ENCODE measurements at regions of chr15 and their contacts with region 1.

Region 1: DNA sequence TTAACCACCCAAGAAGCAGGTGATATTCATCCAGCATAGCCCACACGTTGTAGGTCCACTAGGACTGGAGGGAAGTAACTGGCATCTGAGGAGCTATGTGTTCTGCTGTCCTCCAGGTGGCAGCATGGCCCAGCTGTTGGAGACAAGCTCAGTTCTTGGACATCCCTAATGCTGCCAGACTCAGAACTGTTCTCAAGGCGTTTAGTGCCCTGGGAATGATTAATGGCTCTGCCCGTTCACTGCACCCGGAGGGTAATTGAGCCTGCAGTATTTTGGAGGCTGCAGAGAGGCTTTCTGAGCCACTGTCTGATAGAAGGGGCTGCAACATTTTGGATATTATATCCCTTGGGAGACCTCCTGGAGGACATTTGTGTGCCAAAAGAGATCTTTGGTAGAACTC is 521.2 kb upstream of the SEMA6D start:
- DNase-seq: peak; percentile 69 to 84 (median 79)
- ATAC-seq: peak; percentile 73 to 99 (median 96)
- H3K4me3 ChIP-seq: no peak overlapping the region
- H3K27ac ChIP-seq: no peak overlapping the region
- H3K4me1 ChIP-seq: no peaks in the 10 kb centered on the region
- H3K27me3 ChIP-seq: peaks cover 0 to 3% (median 0%) of the 10 kb centered on the region in 9 donors
- CTCF ChIP-seq: peak; percentile 69 to 89 (median 81)
- POLR2A ChIP-seq: no peak

Region 2: GRCh38 chr15:47466351-47466750 is 270.3 kb after region 1 on chr15:
- intact Hi-C with region 1: loop called in 6 of 10 experiments (anchors 5 to 10 kb)
- DNase-seq: no peak
- ATAC-seq: no peak
- H3K4me3 ChIP-seq: no peak overlapping the region
- H3K27ac ChIP-seq: no peak overlapping the region
- H3K4me1 ChIP-seq: peaks cover 0 to under 1% (median 0%) of the 10 kb centered on the region in 12 donors
- H3K27me3 ChIP-seq: no peaks in the 10 kb centered on the region
- CTCF ChIP-seq: no peak
- POLR2A ChIP-seq: no peak

Region 3: GRCh38 chr15:47609693-47610092 is 413.6 kb after region 1 on chr15:
- intact Hi-C with region 1: loop called in 4 of 10 experiments (anchors 5 to 10 kb)
- DNase-seq: no peak
- ATAC-seq: no peak
- H3K4me3 ChIP-seq: no peak overlapping the region
- H3K27ac ChIP-seq: no peak overlapping the region
- H3K4me1 ChIP-seq: peaks cover 0 to 12% (median 8%) of the 10 kb centered on the region in 12 donors
- H3K27me3 ChIP-seq: peaks cover 0 to 8% (median 0%) of the 10 kb centered on the region in 9 donors
- CTCF ChIP-seq: no peak
- POLR2A ChIP-seq: no peak

Region 4: GRCh38 chr15:47711654-47712053 is 515.6 kb after region 1 on chr15:
- intact Hi-C with region 1: loop called in 3 of 10 experiments (anchors 5 to 10 kb)
- DNase-seq: no peak
- ATAC-seq: no peak
- H3K4me3 ChIP-seq: no peak overlapping the region
- H3K27ac ChIP-seq: no peak overlapping the region
- H3K4me1 ChIP-seq: peaks cover 0 to 12% (median 7%) of the 10 kb centered on the region in 12 donors
- H3K27me3 ChIP-seq: peaks cover 0 to 4% (median 0%) of the 10 kb centered on the region in 9 donors
- CTCF ChIP-seq: peak; percentile 28 to 68 (median 54)
- POLR2A ChIP-seq: no peak

Region 5: DNA sequence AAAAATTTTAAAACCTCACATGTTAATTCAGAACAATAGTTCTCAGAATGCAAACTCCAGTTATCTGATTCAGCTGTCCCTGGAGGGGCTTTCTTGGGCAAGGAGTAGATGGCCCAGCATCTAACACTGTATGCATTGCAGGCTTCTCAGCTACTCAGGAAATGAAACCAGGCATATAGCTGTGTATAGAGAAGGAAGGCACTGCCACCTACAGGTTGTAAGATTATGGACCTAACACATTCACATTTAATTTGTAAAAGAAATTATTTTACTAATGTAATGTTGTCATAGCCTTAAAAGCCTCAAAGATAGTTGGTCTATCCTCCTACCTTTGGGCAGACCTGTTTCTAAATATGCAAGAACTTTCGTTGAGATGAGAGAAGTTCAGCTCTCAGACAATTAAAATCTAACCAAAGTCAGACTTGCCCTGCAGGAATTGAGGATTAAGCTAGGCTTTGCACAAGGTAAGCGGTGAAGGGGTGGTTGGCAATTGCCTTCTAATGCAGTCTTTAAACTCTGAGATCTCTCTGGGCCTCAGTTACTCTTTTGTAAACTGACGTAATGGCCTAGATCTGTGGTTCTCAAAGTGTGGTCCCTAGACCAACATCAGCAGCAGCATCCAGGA is 792.0 kb after region 1 on chr15:
- intact Hi-C with region 1: loop called (anchors 1 to 2 kb)
- DNase-seq: peak in 2 of 5 donors; percentile 31 to 34
- ATAC-seq: peak; percentile 75 to 94 (median 88)
- H3K4me3 ChIP-seq: no peak overlapping the region
- H3K27ac ChIP-seq: no peak overlapping the region
- H3K4me1 ChIP-seq: no peaks in the 10 kb centered on the region
- H3K27me3 ChIP-seq: no peaks in the 10 kb centered on the region
- CTCF ChIP-seq: peak; percentile 60 to 84 (median 74)
- POLR2A ChIP-seq: no peak

Region 6: DNA sequence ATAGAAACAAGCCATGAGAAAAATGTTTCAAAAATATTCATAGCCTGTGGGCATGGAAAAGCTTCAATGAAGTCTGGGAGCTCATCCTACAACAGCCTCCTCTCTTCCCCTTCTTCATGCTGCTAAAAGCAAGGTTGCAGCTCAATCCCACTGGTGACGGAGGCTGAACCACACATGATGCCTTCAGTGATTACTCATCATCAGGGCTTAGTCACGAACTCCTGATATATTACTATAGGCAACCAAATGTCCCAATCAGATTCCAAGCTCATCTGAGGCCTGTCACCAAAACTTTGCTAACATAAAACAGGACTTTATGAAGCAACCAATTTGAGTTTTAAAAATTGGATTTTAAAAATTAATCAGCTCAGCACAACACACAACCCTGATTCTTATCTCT is 900.8 kb after region 1 on chr15:
- intact Hi-C with region 1: loop called in 1 of 10 experiments (anchors 10 kb)
- DNase-seq: no peak
- ATAC-seq: no peak
- H3K4me3 ChIP-seq: no peak overlapping the region
- H3K27ac ChIP-seq: no peak overlapping the region
- H3K4me1 ChIP-seq: no peaks in the 10 kb centered on the region
- H3K27me3 ChIP-seq: peaks cover 0 to 13% (median 0%) of the 10 kb centered on the region in 9 donors
- CTCF ChIP-seq: no peak
- POLR2A ChIP-seq: no peak

Region 7: GRCh38 chr15:48285329-48286214 is 1089.5 kb after region 1 on chr15:
- intact Hi-C with region 1: loop called (anchors 2 to 10 kb)
- DNase-seq: peak in 3 of 5 donors; percentile 28 to 41 (median 38)
- ATAC-seq: peak; percentile 45 to 80 (median 70)
- H3K4me3 ChIP-seq: peak overlapping the region in 8 of 12 donors; percentile 5 to 31 (median 28)
- H3K27ac ChIP-seq: no peak overlapping the region
- H3K4me1 ChIP-seq: peaks cover 0 to 22% (median 0%) of the 10 kb centered on the region in 12 donors
- H3K27me3 ChIP-seq: peaks cover 0 to 3% (median 0%) of the 10 kb centered on the region in 9 donors
- CTCF ChIP-seq: peak; percentile 59 to 84 (median 72)
- POLR2A ChIP-seq: no peak